AG04450 (cell line): ENCODE measurements at regions of chr17 and their contacts with region 1.

Region 1: DNA sequence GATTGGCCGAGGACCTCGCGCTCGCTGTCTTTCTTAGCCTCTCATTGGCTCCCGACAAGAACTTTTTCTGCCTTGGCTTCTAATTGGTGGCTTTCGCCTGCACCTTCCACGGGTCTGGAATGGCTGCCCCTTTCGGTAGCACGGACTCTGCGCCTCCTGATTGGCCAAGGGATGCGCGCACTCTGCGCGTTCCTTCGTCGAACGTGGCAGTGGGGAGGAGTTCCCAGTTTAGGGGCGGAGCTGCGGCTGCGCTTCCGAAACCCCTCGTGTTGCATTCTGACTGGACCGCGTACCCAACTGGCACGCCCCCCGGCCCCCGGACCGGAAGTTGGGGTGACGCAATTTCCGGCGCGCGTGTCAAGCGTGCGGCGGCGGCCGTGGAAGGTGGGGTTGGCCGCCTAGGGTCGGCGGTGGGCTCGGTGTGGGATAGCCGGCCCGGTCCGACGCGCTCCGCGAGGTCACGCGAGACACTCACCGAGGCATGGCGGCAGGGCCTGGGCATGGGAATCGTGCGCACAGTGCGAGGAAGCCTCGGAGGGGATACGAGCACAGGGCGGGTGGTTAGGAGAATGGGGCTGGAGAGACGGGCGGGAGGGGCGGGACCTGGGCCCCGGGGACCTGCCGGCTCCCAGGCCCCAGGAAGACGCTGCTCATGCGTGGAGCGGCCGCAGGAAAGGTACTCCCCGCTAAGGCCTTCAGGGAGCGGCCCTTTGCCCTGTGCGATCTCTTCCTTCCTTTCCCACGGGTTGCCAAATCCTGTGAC is 602 bp upstream of the P4HB start:
- DNase-seq: peak; percentile 100
- H3K4me3 ChIP-seq: peak overlapping the region; percentile 81
- H3K27ac ChIP-seq: peak overlapping the region; percentile 98
- H3K27me3 ChIP-seq: no peaks in the 10 kb centered on the region
- CTCF ChIP-seq: no peak

Region 2: GRCh38 chr17:81833160-81833920 is 27.6 kb before region 1 on chr17 and contains the start of gene MCRIP1:
- CTCF ChIA-PET with region 1: no interaction called
- POLR2A ChIA-PET with region 1: interaction called, 10 read pairs
- DNase-seq: peak; percentile 65
- H3K4me3 ChIP-seq: peak within 1 kb of the TSS; percentile 80
- H3K27ac ChIP-seq: peak within 1 kb of the TSS; percentile 89
- H3K27me3 ChIP-seq: no peaks in the 10 kb centered on the region
- CTCF ChIP-seq: no peak
- polyA plus RNA-seq, gene MCRIP1: 63.2 and 88.2 TPM in 2 replicates

Region 3: DNA sequence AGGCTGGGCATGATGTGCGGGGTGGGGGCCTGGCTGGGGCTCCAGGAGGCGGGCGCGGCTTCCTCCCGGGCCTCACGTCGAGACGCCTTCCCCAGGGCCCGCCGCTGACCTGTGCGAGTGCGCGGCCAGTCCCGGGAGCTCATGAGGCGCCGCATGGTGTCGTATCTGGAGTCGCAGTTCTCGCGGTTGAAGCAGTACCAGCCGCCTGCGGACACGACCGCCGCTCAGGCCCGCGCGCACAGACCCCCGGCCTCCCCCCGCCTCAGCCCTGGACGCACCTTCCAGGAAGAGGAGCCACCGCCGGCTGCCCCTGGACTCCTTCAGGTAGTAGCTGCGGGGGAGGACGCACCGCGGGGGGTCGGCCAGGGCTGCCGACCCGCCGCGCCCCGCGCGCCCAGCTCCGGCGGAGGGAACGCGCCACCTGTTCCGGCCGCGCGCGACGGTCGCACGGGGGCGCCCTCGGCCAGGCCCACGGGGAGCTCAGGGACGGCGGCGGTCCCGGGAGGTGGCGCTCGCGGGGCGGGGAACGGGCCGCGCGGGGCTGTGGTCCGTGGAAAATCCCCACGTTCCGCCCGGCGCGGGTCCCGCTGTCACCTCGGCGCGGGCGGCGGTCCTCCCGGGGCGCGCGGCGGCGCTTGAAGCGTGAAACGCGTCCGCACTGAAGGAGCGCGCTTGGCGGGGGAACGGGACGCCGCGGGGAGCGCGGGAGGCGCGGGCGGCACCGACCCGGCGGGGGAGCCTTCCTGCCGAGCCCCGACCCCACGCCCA is 98.6 kb after region 1 on chr17:
- CTCF ChIA-PET with region 1: no interaction called
- POLR2A ChIA-PET with region 1: no interaction called
- DNase-seq: no peak
- H3K4me3 ChIP-seq: peak overlapping the region; percentile 7; the same call in 1 of the 2 replicates
- H3K27ac ChIP-seq: no peak overlapping the region
- H3K27me3 ChIP-seq: peaks cover 47% of the 10 kb centered on the region
- CTCF ChIP-seq: peak; percentile 45